Activated naive CD4-positive, alpha-beta T cell treated with anti-CD3 and anti-CD28 coated beads for 36 hours (primary cell): ENCODE measurements at regions of chr6 and their contacts with region 1.

Region 1: DNA sequence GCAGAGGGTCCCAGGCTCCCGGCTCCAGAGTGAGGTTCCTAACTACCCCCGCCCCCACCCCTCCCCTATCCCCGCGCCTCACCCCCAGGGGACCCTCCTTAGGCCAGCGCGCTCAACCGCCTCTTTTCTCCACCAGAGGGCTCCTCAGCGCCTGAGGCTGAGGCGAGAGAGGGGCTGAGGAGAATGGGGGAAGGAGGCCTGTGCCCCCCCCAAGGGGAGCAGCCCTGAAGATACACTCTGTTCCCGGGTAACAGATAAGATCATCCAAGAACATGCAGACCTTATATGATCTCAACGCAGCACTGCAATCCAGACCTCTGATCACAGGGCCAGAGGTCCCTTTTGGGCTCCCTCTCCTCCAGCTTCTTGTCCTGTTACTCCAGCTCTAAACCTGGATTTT is 43.3 kb upstream of the MRPS10 start:
- DNase-seq: peak; percentile 53
- H3K4me3 Mint-ChIP-seq: no peak overlapping the region
- H3K27ac Mint-ChIP-seq: no peak overlapping the region
- H3K4me1 Mint-ChIP-seq: no peaks in the 10 kb centered on the region
- H3K27me3 Mint-ChIP-seq: no peaks in the 10 kb centered on the region

Region 2: DNA sequence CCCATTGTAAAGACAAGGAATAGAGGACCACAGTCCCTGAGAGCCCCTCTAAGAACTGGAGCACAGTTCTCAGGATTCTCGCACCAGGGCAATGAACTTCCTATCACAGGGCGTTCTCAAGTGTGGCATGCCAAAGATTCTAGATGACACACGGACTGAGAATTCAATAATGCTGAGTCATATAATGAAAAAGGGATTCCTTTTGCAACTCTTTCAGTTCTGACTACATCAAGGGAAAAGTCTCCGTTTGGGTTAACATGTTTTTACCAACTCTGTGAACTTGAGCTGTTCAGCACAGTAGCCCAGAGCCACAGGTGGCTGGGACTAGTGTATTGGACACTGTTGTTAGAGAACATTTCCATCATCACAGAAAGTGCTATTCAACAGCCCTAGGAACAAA is 343.4 kb before region 1 on chr6:
- CTCF ChIA-PET with region 1: no interaction called
- intact Hi-C with region 1: no loop called
- DNase-seq: no peak
- H3K4me3 Mint-ChIP-seq: no peak overlapping the region
- H3K27ac Mint-ChIP-seq: peak overlapping the region; percentile 50
- H3K4me1 Mint-ChIP-seq: peaks cover 30% of the 10 kb centered on the region
- H3K27me3 Mint-ChIP-seq: no peaks in the 10 kb centered on the region

Region 3: DNA sequence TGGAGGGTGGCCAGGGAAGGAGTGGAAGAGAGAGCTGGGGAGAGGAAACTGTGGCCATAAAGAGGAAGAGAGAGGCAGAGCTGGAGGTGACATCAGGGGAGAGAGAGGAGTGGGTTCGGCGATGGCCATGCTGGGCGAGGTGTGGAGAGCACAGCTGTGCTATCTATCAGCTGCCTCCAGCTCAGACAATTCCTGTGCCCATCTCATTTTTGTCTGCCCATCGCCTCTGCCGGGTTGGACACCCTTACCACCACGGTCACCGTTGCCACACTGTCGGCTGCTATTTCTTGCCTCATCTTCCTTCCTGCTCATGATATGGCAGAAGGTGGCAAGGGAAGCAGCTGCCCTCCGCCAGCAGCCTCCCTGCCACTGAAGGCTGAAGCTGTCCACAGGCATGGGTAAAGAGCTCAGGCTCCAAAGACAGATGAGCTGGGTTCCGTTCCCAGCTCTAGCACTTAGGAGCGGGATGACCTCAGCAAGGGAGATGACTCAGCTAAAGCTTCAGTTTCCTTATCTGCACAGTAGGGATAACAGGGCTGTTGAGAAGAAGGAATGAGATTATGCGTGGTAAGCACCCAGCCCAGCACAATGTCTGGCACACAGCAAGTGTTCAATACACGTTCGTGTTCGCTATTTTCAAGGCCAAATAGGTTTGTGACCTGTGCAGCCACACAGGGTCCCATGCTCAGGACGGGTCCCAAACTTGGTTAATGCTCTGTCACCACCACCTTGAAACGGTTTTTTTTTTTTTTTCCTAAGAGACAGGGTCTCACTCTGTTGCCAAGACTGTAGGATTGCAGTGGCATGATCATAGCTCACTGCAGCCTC is 232.5 kb before region 1 on chr6:
- CTCF ChIA-PET with region 1: no interaction called
- intact Hi-C with region 1: no loop called
- DNase-seq: peak; percentile 70
- H3K4me3 Mint-ChIP-seq: peak overlapping the region; percentile 68
- H3K27ac Mint-ChIP-seq: peak overlapping the region; percentile 99
- H3K4me1 Mint-ChIP-seq: peaks cover 94% of the 10 kb centered on the region
- H3K27me3 Mint-ChIP-seq: no peaks in the 10 kb centered on the region

Region 4: DNA sequence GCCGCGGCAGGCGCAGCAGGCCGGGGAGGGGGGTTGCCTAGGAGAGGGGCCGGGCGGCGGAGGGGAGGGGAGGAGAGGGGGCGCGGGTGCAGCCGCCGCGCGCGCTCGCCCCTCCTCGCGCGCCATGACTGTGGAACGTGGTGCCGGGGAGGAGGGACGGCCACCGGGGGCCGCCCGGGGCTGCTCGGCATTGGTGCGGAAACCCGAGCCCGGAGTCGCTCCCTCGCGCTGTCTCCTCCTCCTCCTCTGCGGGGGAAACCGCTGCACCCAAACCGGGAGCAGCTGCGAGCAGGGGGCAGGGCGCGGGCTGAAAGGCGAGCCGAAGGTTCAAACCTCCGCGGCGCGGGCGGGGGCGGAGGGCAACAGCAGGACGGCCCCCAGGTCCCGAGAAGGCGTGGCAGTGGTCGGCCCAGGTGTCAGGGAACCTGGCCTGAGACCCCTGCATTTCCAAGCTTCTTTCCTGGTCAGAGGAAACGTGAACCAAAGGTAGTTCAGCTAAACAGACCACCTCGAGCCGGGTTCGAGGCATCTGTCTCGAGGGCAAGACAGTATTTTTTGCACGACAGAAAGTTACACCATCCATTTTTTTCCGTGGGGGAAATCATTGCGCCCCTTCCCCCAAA is 192.2 kb after region 1 on chr6:
- CTCF ChIA-PET with region 1: no interaction called
- intact Hi-C with region 1: loop called (anchors 2 kb)
- DNase-seq: peak; percentile 87
- H3K4me3 Mint-ChIP-seq: peak overlapping the region; percentile 88
- H3K27ac Mint-ChIP-seq: peak overlapping the region; percentile 81
- H3K4me1 Mint-ChIP-seq: peaks cover 32% of the 10 kb centered on the region
- H3K27me3 Mint-ChIP-seq: peaks cover 7% of the 10 kb centered on the region

Region 5: DNA sequence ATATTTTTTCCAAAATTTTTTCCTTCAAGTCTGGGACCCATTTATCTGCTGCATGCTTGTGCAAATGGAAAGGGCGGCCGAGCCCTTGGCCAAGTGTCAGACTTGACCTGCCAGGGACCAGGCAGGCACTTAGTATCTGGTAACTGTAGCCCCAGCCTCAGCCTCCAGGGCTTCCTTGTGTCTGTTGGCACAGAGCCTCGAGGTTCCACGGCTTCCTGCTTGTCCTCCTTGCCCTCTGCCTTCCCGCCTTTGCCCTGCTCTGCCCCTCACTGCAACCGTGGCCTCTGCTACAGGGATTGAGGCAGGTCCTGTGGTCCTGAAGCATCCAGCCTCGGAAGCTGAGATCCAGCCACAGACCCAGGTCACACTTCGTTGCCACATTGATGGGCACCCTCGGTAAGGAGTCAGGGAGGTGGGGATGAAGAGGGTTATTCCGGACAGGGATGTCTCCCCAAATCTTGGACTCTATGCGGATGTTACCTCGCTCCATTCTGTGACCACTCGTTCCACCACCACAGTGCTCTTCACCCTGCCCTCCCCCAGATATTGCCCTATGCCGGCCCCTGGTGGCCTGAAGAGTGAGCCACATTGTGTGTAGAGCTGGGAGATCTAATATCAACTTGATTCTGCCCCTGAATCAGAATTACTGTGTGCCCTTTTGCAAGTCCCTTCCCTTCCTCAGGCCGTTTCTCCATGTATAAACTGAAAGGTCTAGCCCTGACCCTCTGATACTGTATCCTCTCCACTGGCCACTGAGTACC is 868.6 kb after region 1 on chr6:
- CTCF ChIA-PET with region 1: no interaction called
- intact Hi-C with region 1: no loop called
- DNase-seq: peak; percentile 26
- H3K4me3 Mint-ChIP-seq: no peak overlapping the region
- H3K27ac Mint-ChIP-seq: no peak overlapping the region
- H3K4me1 Mint-ChIP-seq: no peaks in the 10 kb centered on the region
- H3K27me3 Mint-ChIP-seq: no peaks in the 10 kb centered on the region